Natural killer cell (primary cell): ENCODE measurements at regions of chr18 and their contacts with region 1.

Region 1: DNA sequence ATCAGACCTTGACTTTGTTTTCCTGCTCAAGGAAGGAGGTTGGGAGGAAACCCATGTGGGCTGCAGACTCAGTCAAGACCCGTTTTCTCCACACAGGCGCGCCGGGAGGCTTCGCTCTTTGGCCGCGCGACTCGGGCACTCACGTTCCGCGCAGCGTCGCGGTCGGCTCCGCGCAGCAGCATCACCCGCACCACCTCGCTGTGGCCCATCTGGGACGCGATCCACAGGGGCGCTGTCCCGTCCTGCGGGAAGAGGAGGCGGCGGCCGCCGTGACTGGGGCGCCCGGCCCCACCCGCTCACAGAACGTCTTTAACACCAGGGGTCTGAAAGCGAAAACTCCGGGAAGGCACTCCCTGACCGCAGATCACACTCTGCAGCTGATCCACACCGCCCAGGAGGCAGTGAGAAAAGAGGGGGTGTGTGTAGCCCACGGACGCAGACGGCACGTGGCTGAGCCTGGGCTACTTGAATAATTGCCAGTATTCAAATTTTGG is 33.1 kb upstream of the NPC1 start:
- DNase-seq: peak; percentile 20 to 30
- ATAC-seq: peak; percentile 61 to 76 (median 72)
- H3K4me3 ChIP-seq: no peak overlapping the region
- H3K4me3 Mint-ChIP-seq: peak overlapping the region; percentile 68
- H3K27ac ChIP-seq: no peak overlapping the region
- H3K27ac Mint-ChIP-seq: no peak overlapping the region
- H3K4me1 ChIP-seq: peaks cover 11% of the 10 kb centered on the region
- H3K4me1 Mint-ChIP-seq: peaks cover 16 to 25% of the 10 kb centered on the region in 2 donors
- H3K27me3 ChIP-seq: peaks cover 26% of the 10 kb centered on the region
- H3K27me3 Mint-ChIP-seq: peaks cover 37 to 43% of the 10 kb centered on the region in 2 donors
- CTCF ChIP-seq: no peak

Region 2: GRCh38 chr18:23703057-23703986 is 83.9 kb after region 1 on chr18:
- intact Hi-C with region 1: loop called (anchors 1 kb)
- DNase-seq: peak in 1 of 2 donors; percentile 68
- ATAC-seq: peak in 2 of 3 donors; percentile 64 to 74
- H3K4me3 ChIP-seq: no peak overlapping the region
- H3K4me3 Mint-ChIP-seq: no peak overlapping the region
- H3K27ac ChIP-seq: no peak overlapping the region
- H3K27ac Mint-ChIP-seq: no peak overlapping the region
- H3K4me1 ChIP-seq: no peaks in the 10 kb centered on the region
- H3K4me1 Mint-ChIP-seq: no peaks in the 10 kb centered on the region
- H3K27me3 ChIP-seq: no peaks in the 10 kb centered on the region
- H3K27me3 Mint-ChIP-seq: peaks cover 20 to 36% of the 10 kb centered on the region in 2 donors
- CTCF ChIP-seq: peak; percentile 38

Region 3: DNA sequence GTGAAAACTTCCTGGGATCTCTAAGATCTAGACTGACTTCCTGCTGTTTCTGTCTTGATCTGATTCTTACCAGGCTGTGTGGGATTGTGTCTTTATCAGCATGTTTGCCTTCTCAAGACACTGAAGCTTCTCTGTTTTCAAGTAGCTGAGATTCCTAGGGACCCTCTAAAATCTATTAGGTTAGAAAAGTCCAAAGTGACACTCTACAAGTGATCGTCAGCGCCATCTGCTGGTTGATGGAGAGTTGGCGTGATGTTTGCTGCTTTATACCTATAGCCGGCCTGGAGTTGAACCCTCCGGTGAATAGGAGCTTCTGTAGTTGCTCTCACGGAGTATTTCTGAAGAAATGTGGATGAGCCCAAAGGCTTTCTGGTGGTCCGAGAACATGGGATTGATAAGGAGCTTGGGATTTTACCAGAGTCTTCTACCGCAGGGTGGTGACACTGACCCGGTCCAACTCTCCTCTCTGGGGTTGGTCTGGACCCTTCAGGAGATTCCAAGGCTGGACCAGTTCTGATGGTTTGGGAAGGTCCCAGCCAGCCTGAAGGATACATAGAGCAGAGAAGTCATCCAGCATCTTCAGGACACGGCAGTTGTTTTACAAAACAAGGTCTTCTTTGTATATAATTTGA is 299.1 kb after region 1 on chr18:
- intact Hi-C with region 1: loop called (anchors 1 kb)
- DNase-seq: peak; percentile 75 to 90
- ATAC-seq: peak; percentile 72 to 91 (median 87)
- H3K4me3 ChIP-seq: no peak overlapping the region
- H3K4me3 Mint-ChIP-seq: no peak overlapping the region
- H3K27ac ChIP-seq: no peak overlapping the region
- H3K27ac Mint-ChIP-seq: peak overlapping the region; percentile 22 to 75
- H3K4me1 ChIP-seq: peaks cover 6% of the 10 kb centered on the region
- H3K4me1 Mint-ChIP-seq: peaks cover 13 to 17% of the 10 kb centered on the region in 2 donors
- H3K27me3 ChIP-seq: peaks cover 3% of the 10 kb centered on the region
- H3K27me3 Mint-ChIP-seq: peaks cover 15 to 17% of the 10 kb centered on the region in 2 donors
- CTCF ChIP-seq: peak; percentile 93